Dendritic cell treated with granulocyte-macrophage colony-stimulating factor and Interleukin-4, amounts not matched to agents 40 ng/mL and 50 ng/mL, for 4 days (primary cell): ENCODE measurements at regions of chr9 and their contacts with region 1.

Region 1: DNA sequence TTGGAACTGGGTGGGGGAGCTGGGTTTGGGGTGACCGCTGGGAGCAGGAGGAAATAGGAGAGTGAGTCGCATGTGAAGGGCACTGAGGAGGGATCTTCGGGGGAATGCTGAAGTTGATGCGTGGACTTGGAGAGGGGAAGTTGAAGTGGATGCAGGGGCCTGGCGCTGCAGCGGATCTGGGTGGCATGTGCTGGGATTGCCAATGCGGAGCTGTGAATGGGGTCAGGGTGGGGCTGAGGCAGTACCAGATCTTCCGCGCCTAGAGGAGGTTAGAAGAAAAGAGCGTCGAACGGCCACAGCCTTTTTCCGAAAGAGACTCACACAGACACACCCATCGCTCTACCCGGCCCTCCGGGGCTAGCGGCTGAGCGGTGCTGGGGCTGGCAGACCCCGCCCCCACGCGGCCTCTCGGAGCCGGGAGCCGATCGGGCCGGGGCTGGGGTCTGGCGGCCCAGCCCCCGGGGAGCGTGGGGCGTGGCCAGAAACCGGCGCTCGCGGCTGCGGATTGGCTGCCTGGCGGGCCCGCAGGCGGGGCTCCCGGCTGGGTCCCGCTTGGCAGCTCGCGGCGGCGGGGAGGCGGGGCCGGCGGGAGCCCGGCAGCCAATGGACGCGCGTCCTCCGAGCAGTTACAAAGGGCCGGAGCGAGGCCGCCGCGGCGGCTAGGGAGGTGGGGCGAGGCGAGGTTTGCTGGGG is at the start of gene TGFBR1:
- H3K4me3 Mint-ChIP-seq: peak within 1 kb of the TSS; percentile 88
- H3K27ac Mint-ChIP-seq: peak within 1 kb of the TSS; percentile 94
- H3K4me1 Mint-ChIP-seq: peaks cover 51% of the 10 kb centered on the region
- H3K27me3 Mint-ChIP-seq: no peaks in the 10 kb centered on the region

Region 2: GRCh38 chr9:99057665-99058625 is 46.7 kb before region 1 on chr9:
- intact Hi-C with region 1: loop called (anchors 5 kb)
- H3K4me3 Mint-ChIP-seq: peak overlapping the region; percentile 55
- H3K27ac Mint-ChIP-seq: peak overlapping the region; percentile 93
- H3K4me1 Mint-ChIP-seq: peaks cover 67% of the 10 kb centered on the region
- H3K27me3 Mint-ChIP-seq: peaks cover 22% of the 10 kb centered on the region

Region 3: DNA sequence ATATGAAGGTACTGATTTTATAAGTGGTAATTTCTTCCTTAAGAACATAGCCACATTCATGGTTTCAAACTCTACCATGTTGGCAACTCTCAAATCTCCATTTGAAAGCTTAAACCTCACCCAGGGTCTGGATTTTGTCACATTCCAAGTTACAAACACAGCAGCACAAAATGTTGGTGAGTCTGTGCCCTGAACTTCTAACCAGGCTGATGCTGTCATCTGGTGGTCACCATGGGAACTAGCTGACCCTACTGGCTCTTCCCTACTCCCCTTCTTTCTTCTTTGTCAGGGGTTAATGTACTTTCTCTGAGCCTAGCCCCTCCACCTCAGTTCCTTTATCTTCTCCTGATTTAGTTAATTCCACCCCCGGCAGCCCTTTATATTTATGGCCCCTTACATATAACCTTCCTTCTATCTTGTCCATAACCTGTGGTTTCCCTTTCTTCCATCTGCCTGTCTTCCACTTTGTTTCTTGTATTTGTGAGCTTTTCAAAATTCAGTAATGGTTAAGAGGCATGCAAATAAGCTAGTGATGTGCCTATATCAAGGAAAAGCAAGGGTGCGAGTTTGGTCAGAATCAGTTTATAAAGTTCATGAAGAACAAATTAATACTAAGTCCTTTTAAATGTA is 36.2 kb after region 1 on chr9:
- intact Hi-C with region 1: loop called (anchors 2 kb)
- H3K4me3 Mint-ChIP-seq: no peak overlapping the region
- H3K27ac Mint-ChIP-seq: peak overlapping the region; percentile 34
- H3K4me1 Mint-ChIP-seq: peaks cover 50% of the 10 kb centered on the region
- H3K27me3 Mint-ChIP-seq: no peaks in the 10 kb centered on the region

Region 4: DNA sequence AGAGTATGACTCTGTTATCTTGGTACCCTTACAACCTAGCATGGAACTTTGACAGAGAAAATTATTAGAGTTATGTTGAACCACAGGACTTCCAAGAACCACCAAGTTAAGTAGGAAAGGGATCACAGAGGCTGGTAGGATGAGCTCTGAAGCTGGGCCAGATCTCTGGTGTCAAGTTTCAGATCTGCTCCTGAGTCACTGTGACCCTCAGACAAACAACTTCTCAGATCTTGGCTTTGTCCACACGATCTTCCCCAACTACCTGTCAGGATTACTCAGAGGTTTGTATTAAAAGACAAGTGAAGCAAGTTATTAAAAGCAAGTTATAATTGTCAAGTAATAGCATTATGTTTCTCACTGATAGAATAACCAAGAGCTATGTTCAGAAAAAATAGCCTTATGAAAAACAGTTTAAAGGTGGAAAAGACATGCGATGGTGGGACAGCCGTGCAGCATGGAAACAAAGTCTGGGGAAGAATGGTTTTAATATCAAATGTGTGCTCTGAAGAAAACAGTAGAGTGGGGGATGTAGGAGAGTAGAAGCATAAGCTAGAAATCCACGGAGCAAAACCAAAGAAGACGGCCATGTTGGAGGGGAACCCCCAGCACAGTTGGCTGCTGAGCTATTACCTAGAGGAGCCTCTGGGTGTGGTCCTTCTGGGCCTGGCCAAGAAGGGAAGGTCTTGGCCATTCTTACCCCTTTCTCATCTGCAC is 306.6 kb after region 1 on chr9:
- intact Hi-C with region 1: no loop called
- H3K4me3 Mint-ChIP-seq: no peak overlapping the region
- H3K27ac Mint-ChIP-seq: no peak overlapping the region
- H3K4me1 Mint-ChIP-seq: peaks cover 8% of the 10 kb centered on the region
- H3K27me3 Mint-ChIP-seq: no peaks in the 10 kb centered on the region